ENCODE measurements at regions of chr3 and their contacts with region 1.

Region 1: DNA sequence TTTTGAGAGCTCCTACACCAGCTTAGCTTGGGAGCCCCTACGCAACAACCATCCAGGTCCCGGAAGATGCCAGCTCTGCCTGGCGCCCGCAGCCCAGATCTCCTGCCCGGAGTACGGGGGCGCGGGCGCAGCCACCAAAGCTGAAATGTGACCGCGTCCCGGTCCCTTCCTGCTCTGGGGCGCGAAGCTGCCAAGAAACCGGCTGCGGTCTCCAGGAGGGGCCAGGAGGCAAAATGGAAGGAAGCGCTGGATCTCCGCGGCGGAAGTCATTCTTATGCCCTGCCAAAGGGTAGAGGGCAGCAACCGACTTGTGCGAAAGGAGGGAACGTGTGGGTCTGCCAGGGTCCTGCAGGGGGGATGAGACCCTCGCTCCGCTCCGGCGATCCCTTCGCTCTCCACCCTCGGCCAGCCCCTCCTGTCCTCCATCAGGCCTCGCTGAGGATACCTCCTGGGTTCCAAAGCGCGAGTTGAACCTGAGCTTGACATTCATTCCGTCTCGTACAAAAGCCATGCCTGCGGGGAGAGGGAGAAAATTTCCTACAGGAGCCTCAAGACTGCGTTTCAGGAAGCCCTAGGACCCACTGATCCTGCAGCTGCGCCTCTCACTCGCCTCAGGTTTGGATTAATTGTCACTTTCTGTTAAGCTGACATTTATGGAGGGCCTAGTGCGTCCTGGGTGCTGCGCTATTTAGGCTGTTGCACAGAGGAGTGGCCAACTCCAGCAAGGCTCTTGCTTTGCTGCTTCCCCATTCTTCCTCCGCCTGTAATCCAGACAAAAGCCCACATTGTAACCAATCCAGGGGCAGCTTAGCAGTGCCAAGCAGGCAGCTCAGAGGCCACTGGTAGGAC is 98.3 kb upstream of the VGLL3 start:
- DNase-seq: peak; percentile 52 to 69
- H3K4me3 ChIP-seq: peak overlapping the region; percentile 74
- H3K27ac ChIP-seq: no peak overlapping the region
- H3K4me1 ChIP-seq: peaks cover 8% of the 10 kb centered on the region
- H3K27me3 ChIP-seq: no peaks in the 10 kb centered on the region
- CTCF ChIP-seq: no peak

Region 2: DNA sequence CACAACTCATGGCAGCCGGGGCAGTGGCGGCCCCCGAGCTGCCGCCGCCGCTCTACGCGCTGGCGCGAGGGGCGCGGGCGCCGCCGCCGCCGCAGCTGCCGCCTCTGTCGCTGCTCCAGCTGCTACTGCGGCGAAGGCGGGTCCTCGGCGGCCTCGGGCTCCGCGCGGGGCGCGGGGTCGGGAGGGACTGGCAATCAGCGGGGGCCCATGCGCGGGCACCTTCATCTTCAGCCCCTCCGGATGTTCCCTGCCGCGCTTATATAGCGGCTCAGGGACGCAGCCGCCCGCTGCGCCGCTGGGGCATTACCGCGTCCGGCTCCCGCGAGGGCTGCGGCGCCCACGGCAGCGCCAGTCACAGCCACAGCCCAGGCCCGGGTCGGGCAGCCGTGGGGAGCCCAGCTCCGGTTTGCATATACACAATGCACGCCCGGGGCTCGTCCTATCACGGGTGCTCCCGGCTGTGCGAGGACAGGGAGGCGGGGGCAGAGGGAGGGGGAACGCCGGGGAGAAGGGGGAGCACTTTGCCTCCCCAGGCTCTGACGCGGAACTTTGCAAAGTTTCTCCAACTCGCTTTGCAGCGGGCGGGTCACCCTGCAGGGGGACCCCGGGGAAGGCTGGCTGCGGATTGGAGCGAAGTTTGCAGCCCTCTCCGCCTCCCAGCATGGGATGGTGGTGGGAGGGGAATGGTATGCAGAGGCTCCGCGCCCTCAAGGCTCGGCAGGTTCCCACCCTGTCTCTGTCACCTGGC is 98.3 kb before region 1 on chr3 and contains the start of gene VGLL3:
- CTCF ChIA-PET with region 1: no interaction called
- POLR2A ChIA-PET with region 1: no interaction called
- intact Hi-C with region 1: no loop called
- DNase-seq: peak; percentile 62 to 88
- H3K4me3 ChIP-seq: peak within 1 kb of the TSS; percentile 67
- H3K27ac ChIP-seq: peak within 1 kb of the TSS; percentile 69
- H3K4me1 ChIP-seq: peaks cover 49% of the 10 kb centered on the region
- H3K27me3 ChIP-seq: no peaks in the 10 kb centered on the region
- CTCF ChIP-seq: no peak; the same call in 1 of the 2 replicates
- total RNA-seq, gene VGLL3: 20.5 and 26.8 TPM in 2 replicates

Region 3: DNA sequence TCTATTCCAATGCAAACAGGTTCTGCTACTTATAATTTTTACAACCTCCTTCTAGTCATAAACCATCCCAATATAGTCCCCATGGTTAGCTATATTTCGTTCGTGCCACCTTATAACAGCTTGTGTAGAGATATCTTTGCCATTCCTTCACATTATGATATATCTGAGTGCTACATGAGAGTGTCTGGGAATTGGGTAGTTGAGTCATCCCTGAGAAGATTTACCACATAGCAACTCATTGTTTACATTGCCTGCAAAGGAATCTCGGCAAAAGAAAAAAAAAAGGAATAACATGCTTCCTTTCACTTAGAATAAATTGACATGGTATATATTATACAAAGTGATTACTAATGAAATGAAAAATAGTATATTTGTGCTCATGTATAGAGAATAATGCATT is 12.3 kb before region 1 on chr3:
- CTCF ChIA-PET with region 1: no interaction called
- POLR2A ChIA-PET with region 1: interaction called, 10 read pairs
- intact Hi-C with region 1: no loop called
- DNase-seq: peak in 1 of 2 experiments; percentile 79
- H3K4me3 ChIP-seq: no peak overlapping the region
- H3K27ac ChIP-seq: no peak overlapping the region
- H3K4me1 ChIP-seq: peaks cover 13% of the 10 kb centered on the region
- H3K27me3 ChIP-seq: no peaks in the 10 kb centered on the region
- CTCF ChIP-seq: no peak

Region 4: DNA sequence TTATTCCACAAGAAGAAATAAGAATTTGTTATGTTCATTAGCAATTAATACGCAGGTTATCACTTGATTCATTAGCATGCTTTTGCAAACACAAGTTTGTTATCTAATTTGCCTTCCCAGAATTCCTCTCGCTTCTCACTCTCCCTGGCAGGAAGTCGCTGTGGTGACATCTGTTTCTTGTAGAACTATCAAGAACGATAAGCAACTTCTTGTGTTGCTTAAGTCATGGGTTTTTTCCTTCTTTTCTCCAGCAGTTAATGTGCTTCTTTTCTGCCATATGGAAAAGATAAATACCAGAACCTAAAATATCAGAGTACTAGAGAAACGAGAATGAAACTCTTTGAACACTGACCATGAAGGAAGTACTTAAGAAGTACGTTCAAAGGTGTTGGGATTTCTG is 38.1 kb after region 1 on chr3:
- CTCF ChIA-PET with region 1: no interaction called
- POLR2A ChIA-PET with region 1: no interaction called
- intact Hi-C with region 1: no loop called
- DNase-seq: no peak
- H3K4me3 ChIP-seq: no peak overlapping the region
- H3K27ac ChIP-seq: no peak overlapping the region
- H3K4me1 ChIP-seq: no peaks in the 10 kb centered on the region
- H3K27me3 ChIP-seq: no peaks in the 10 kb centered on the region
- CTCF ChIP-seq: no peak

Region 5: DNA sequence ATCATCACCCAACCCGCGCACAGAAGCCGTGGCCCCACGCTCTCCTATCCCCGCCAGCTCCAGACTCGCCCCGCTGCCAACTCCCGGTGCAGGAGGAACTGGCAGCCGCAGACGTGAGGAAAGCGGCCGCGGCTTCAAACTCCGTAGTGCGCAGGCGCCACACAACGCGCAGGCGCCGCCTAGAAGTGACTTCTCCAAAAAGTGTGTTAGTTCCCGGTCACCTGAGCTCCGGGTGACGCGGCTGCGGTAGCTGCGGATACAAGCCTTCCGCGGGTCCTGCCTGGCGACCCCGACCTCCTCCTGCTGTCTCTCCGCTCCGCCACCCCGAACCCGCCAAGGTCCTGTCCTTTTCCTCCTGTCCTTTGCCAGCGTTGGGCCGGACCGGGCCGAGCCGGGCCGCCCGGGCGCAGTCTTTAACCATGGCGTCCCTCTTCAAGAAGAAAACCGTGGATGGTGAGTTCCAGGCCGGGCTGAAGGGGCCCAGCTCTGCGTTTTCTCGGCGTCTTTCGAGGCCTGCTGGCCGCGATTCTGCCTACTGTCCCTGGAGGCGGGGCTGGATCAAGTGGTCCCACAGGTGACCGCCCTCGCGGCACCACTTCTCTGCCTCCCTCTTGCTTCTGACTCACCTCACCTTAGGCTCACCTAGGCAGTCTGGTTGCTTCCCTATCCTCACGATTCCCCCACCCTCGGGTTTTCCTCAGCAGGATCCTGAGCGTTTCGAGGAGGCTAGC is 138.1 kb after region 1 on chr3 and contains the start of gene CHMP2B:
- CTCF ChIA-PET with region 1: no interaction called
- POLR2A ChIA-PET with region 1: no interaction called
- intact Hi-C with region 1: loop called (anchors 5 kb)
- DNase-seq: peak; percentile 85 to 92
- H3K4me3 ChIP-seq: peak within 1 kb of the TSS; percentile 84
- H3K27ac ChIP-seq: peak within 1 kb of the TSS; percentile 97
- H3K4me1 ChIP-seq: peaks cover 25% of the 10 kb centered on the region
- H3K27me3 ChIP-seq: no peaks in the 10 kb centered on the region
- CTCF ChIP-seq: no peak
- total RNA-seq, gene CHMP2B: 38.1 and 54.6 TPM in 2 replicates